ENCODE measurements at regions of chr15 and their contacts with region 1.

Region 1: GRCh38 chr15:101455291-101456025 is 34.0 kb downstream of the PCSK6 start:
- DNase-seq: no peak
- H3K4me3 ChIP-seq: no peak overlapping the region
- H3K27ac ChIP-seq: no peak overlapping the region
- H3K4me1 ChIP-seq: no peaks in the 10 kb centered on the region
- H3K27me3 ChIP-seq: no peaks in the 10 kb centered on the region
- CTCF ChIP-seq: no peak

Region 2: DNA sequence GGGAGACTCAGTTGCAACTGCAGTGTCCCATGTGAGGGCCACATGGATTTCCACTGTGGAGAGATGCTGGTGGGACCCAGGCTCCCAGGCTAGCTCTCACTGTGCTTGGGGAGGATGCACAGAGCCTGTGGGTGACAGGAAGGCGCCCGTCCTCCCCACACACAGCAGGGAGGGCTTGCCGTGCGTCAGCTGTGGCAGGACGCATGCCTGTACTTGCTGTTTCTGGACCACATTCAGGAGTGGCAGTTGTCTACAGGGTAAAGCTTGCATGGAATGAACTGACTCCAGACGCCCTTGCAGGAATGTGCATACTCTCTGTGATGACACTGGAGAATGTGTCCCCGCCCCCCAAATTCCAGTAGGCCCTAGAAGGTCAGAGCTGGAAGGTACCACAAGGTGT is 96.6 kb before region 1 on chr15:
- CTCF ChIA-PET with region 1: no interaction called
- dilution Hi-C with region 1: no loop called
- in situ Hi-C with region 1: no loop called
- intact Hi-C with region 1: no loop called
- DNase-seq: peak; percentile 94
- H3K4me3 ChIP-seq: no peak overlapping the region
- H3K27ac ChIP-seq: peak overlapping the region; percentile 58
- H3K4me1 ChIP-seq: peaks cover 50% of the 10 kb centered on the region
- H3K27me3 ChIP-seq: no peaks in the 10 kb centered on the region
- CTCF ChIP-seq: no peak

Region 3: DNA sequence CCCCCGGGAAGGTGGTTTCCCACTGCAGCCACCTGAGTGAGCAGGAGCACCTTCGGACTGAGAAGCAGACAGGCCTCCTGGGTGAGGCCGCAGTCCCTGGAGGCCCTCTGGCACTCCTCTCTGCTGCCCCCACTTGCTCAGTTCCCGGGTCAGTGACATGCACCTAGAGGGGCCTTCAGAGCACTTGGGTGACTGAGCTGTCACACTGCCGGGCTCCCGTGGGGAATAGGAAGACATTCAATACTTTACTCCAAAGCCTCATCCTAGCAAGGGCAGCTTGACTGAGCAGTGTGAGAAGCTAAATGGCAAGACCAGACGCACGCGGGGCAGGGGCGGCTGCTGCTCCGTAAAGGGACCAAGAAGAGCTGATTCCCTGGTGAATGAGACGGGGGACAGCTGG is 28.6 kb before region 1 on chr15:
- CTCF ChIA-PET with region 1: no interaction called
- dilution Hi-C with region 1: no loop called
- in situ Hi-C with region 1: no loop called
- intact Hi-C with region 1: no loop called
- DNase-seq: no peak
- H3K4me3 ChIP-seq: no peak overlapping the region
- H3K27ac ChIP-seq: no peak overlapping the region
- H3K4me1 ChIP-seq: no peaks in the 10 kb centered on the region
- H3K27me3 ChIP-seq: no peaks in the 10 kb centered on the region
- CTCF ChIP-seq: no peak

Region 4: GRCh38 chr15:101523560-101523940 is 68.1 kb after region 1 on chr15:
- CTCF ChIA-PET with region 1: no interaction called
- dilution Hi-C with region 1: loop called (anchors 5 kb)
- in situ Hi-C with region 1: no loop called
- intact Hi-C with region 1: no loop called
- DNase-seq: no peak
- H3K4me3 ChIP-seq: no peak overlapping the region
- H3K27ac ChIP-seq: no peak overlapping the region
- H3K4me1 ChIP-seq: no peaks in the 10 kb centered on the region
- H3K27me3 ChIP-seq: peaks cover 2% of the 10 kb centered on the region
- CTCF ChIP-seq: no peak

Region 5: GRCh38 chr15:101536166-101536874 is 80.9 kb after region 1 on chr15:
- CTCF ChIA-PET with region 1: no interaction called
- dilution Hi-C with region 1: no loop called
- in situ Hi-C with region 1: no loop called
- intact Hi-C with region 1: no loop called
- DNase-seq: peak; percentile 8
- H3K4me3 ChIP-seq: no peak overlapping the region
- H3K27ac ChIP-seq: no peak overlapping the region
- H3K4me1 ChIP-seq: no peaks in the 10 kb centered on the region
- H3K27me3 ChIP-seq: no peaks in the 10 kb centered on the region
- CTCF ChIP-seq: no peak